Mammary epithelial cell (primary cell): ENCODE measurements at regions of chr2 and their contacts with region 1.

Region 1: DNA sequence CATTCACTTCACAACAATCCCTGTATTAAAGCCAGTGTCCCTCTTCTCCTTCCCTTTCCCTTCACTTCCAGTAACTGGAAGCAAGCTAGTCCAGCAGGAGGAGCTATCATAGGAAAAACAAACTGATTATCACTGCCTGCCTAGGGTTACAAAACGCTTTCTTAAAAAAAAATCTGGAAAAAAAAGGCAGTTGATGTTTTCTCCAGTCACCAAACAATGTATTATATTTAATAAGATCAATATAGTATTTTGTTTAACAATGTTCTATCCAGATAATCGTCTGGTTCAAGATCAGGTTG is 78.8 kb upstream of the ITGB6 start:
- DNase-seq: no peak
- H3K4me3 ChIP-seq: no peak overlapping the region
- H3K27ac ChIP-seq: peak overlapping the region; percentile 53
- H3K4me1 ChIP-seq: peaks cover 19% of the 10 kb centered on the region
- H3K27me3 ChIP-seq: no peaks in the 10 kb centered on the region
- CTCF ChIP-seq: peak; percentile 48 to 54

Region 2: DNA sequence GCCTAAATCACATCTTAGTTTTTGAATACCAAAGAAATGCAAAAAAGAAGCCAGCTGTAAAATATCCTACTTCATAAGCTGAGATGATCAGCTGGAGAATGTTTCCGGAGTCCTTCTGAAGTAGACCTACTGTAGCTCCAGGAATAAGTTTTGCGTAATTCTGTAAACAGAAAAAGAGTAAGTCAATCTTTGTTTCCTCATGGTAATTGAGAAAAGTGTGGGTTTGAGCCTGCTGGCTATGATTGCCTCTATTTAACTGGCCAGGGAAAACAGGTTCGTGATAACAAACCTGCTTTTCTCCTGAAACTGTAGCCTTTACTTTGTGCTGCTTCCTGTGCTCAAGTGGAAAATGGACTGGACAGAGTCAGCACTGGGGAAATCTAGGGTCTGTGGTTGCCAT is 136.9 kb before region 1 on chr2:
- CTCF ChIA-PET with region 1: interaction called, 11 read pairs
- dilution Hi-C with region 1: no loop called
- in situ Hi-C with region 1: no loop called
- intact Hi-C with region 1: no loop called
- DNase-seq: no peak
- H3K4me3 ChIP-seq: no peak overlapping the region
- H3K27ac ChIP-seq: peak overlapping the region; percentile 43
- H3K4me1 ChIP-seq: peaks cover 12% of the 10 kb centered on the region
- H3K27me3 ChIP-seq: no peaks in the 10 kb centered on the region
- CTCF ChIP-seq: no peak

Region 3: GRCh38 chr2:160266037-160266551 is 12.7 kb before region 1 on chr2:
- CTCF ChIA-PET with region 1: no interaction called
- dilution Hi-C with region 1: no loop called
- in situ Hi-C with region 1: no loop called
- intact Hi-C with region 1: no loop called
- DNase-seq: no peak
- H3K4me3 ChIP-seq: no peak overlapping the region
- H3K27ac ChIP-seq: no peak overlapping the region
- H3K4me1 ChIP-seq: peaks cover 16% of the 10 kb centered on the region
- H3K27me3 ChIP-seq: no peaks in the 10 kb centered on the region
- CTCF ChIP-seq: no peak

Region 4: GRCh38 chr2:160358046-160358445 is 79.2 kb after region 1 on chr2:
- CTCF ChIA-PET with region 1: no interaction called
- dilution Hi-C with region 1: no loop called
- in situ Hi-C with region 1: no loop called
- intact Hi-C with region 1: no loop called
- DNase-seq: peak; percentile 29
- H3K4me3 ChIP-seq: no peak overlapping the region
- H3K27ac ChIP-seq: no peak overlapping the region
- H3K4me1 ChIP-seq: peaks cover 14% of the 10 kb centered on the region
- H3K27me3 ChIP-seq: no peaks in the 10 kb centered on the region
- CTCF ChIP-seq: no peak